ENCODE measurements at regions of chr4 and their contacts with region 1.

Region 1: DNA sequence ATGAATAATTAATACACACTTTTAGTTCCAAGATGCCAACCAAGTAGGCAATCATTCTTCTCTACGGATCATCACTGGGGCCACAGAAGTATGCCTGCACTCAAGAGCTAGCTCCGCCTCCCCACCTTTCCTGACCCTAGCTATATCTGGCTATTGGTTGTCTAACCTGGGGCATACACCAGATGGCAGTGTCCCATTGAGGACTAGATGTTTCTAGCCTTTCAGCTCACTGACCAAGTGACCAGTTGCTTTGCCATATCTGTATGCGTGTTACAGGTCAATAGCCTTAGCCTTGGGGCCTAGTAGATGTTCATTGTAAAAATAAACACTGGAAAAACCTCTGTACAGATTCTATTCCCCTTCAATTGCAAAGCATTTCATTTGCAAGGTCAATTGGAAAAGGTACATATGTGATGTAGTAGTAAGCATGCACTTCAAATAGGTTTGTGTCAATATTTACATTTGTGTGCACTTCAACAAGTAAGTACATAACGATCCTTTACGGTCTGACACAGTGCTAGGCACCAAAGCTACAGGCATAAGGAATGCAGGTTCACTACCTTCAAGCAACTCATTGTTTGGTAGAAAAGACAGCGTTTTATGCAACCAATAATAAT is 521.7 kb downstream of the PPARGC1A start:
- DNase-seq: no peak

Region 2: DNA sequence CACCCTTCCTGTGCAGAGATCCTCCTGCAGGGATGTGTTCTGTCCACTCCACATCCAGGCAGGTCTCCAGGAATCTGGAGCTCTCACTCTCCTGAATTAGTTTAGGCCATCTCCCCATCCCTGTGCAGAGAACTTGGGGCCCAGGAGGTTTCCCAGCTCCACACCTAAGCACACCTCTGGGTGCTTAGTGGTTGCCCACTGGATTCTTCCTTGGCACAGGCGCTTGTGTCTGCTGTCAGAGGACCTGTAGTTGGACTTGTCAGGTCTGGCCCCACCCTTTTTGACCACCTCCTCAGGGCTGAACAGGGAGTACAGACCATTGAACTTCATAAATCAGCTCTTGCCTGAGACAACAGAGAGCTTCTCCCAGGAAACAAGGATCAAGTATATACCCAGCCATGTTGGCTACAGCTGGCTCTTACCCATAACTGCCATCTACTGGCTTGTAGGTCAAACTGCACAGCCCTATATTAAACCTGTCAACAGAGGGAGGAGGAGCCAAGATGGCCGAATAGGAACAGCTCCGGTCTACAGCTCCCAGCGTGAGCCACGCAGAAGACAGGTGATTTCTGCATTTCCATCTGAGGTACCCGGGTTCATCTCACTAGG is 246.2 kb after region 1 on chr4:
- intact Hi-C with region 1: loop called (anchors 5 kb)
- DNase-seq: no peak

Measured in cardiac septum (tissue), 1 donor.